Body of pancreas (tissue), 4 donors: ENCODE measurements at regions of chr18 and their contacts with region 1.

Region 1: GRCh38 chr18:58493516-58494253 is 135.2 kb downstream of the ALPK2 start:
- DNase-seq: peak; percentile 80 to 81 (median 80)
- ATAC-seq: peak; percentile 93
- H3K4me3 ChIP-seq: no peak overlapping the region
- H3K27ac ChIP-seq: peak overlapping the region in 2 of 4 donors; percentile 4 to 8
- H3K4me1 ChIP-seq: peaks cover 21% of the 10 kb centered on the region
- H3K27me3 ChIP-seq: no peaks in the 10 kb centered on the region
- CTCF ChIP-seq: peak; percentile 75 to 88 (median 83)
- POLR2A ChIP-seq: no peak

Region 2: GRCh38 chr18:58359218-58359617 is 134.5 kb before region 1 on chr18:
- intact Hi-C with region 1: no loop called
- DNase-seq: no peak
- ATAC-seq: no peak
- H3K4me3 ChIP-seq: no peak overlapping the region
- H3K27ac ChIP-seq: no peak overlapping the region
- H3K4me1 ChIP-seq: no peaks in the 10 kb centered on the region
- H3K27me3 ChIP-seq: no peaks in the 10 kb centered on the region
- CTCF ChIP-seq: no peak
- POLR2A ChIP-seq: no peak

Region 3: GRCh38 chr18:58394602-58395425 is 98.9 kb before region 1 on chr18:
- intact Hi-C with region 1: loop called (anchors 5 kb)
- DNase-seq: no peak
- ATAC-seq: no peak
- H3K4me3 ChIP-seq: no peak overlapping the region
- H3K27ac ChIP-seq: no peak overlapping the region
- H3K4me1 ChIP-seq: peaks cover 13% of the 10 kb centered on the region
- H3K27me3 ChIP-seq: no peaks in the 10 kb centered on the region
- CTCF ChIP-seq: no peak
- POLR2A ChIP-seq: no peak

Region 4: DNA sequence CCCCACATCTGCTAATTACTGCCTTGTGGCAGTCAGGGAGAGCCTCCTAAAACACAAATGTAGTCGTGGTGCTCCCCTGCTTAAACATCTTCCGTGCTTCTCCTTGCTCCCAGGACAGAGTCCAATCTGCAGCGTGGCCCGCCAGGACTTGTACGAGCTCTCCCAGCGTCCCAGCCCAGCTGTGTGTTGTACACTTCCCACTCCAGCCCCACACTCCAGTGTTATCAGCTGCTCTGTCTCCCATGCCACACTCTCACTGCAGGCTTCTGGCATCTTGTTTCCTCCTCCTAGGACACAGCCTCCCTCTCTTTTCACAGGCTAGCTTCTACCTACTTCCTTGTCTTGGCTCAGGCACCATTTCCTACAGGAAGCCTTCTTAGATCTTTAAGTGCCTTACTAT is 64.2 kb before region 1 on chr18:
- intact Hi-C with region 1: no loop called
- DNase-seq: peak; percentile 47 to 78 (median 57)
- ATAC-seq: peak; percentile 78
- H3K4me3 ChIP-seq: no peak overlapping the region
- H3K27ac ChIP-seq: no peak overlapping the region
- H3K4me1 ChIP-seq: peaks cover 4% of the 10 kb centered on the region
- H3K27me3 ChIP-seq: no peaks in the 10 kb centered on the region
- CTCF ChIP-seq: no peak
- POLR2A ChIP-seq: no peak